Mucosa of descending colon (tissue), 3 donors: ENCODE measurements at regions of chr1 and their contacts with region 1.

Region 1: GRCh38 chr1:84143796-84144565 is at the start of gene PRKACB:
- DNase-seq: peak in 1 of 3 donors; percentile 36
- ATAC-seq: peak; percentile 91
- H3K4me3 ChIP-seq: no peak within 1 kb of the TSS
- H3K4me1 ChIP-seq: peaks cover 6% of the 10 kb centered on the region
- CTCF ChIP-seq: no peak
- total RNA-seq, gene PRKACB: 91.0 to 155 (median 99.3) TPM

Region 2: GRCh38 chr1:84208935-84209334 is 65.0 kb after region 1 on chr1:
- intact Hi-C with region 1: no loop called
- DNase-seq: no peak
- ATAC-seq: no peak
- H3K4me3 ChIP-seq: no peak overlapping the region
- H3K4me1 ChIP-seq: no peaks in the 10 kb centered on the region
- CTCF ChIP-seq: no peak

Region 3: GRCh38 chr1:84260864-84261518 is 117.0 kb after region 1 on chr1:
- intact Hi-C with region 1: loop called in 1 of 2 experiments (anchors 10 kb)
- DNase-seq: peak in 1 of 3 donors; percentile 47
- ATAC-seq: peak; percentile 91
- H3K4me3 ChIP-seq: no peak overlapping the region
- H3K4me1 ChIP-seq: peaks cover 21% of the 10 kb centered on the region
- CTCF ChIP-seq: no peak

Region 4: DNA sequence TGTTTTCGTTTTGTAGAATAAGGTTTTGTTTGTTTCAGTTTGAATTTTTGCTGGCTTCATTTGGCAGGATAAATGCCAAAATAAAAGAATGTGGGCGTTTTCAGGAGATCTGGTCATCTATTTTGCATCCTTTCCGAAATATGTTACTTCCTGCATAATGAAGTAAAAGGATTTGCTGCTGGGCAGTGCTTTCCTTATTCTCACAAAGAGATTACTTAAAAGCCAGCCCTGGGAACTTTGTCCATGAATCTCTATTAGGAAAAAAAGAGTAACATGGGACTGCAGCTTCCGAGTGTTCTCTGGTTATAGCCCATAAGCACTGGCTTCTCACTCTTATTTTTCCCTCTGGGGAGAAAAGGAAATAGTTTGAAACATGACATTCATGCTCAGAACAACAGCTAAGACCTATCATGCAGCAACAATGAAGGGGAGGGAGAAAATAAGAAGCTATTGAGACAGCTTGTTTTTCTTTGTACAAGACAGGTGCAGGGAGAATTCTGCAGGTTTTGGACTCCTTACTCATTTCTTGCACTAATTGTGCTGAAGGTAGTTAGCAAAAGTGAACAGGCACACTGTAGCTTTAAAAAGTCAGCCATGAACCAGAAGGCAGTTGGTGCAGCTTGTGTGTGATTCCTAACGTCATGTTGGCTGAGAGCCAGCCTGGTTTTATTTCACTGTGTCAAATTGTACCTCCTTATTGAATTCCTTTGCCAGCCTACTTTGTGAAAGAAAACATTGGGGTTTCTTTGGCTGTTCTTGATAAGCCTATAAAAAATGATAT is 157.2 kb after region 1 on chr1 and contains the start of gene SAMD13:
- intact Hi-C with region 1: loop called in 1 of 2 experiments (anchors 10 kb)
- DNase-seq: peak in 2 of 3 donors; percentile 36 to 99
- ATAC-seq: peak; percentile 52
- H3K4me3 ChIP-seq: no peak within 1 kb of the TSS
- H3K4me1 ChIP-seq: peaks cover 22% of the 10 kb centered on the region
- CTCF ChIP-seq: no peak
- total RNA-seq, gene SAMD13: 6.8 to 35.9 (median 21.0) TPM

Region 5: DNA sequence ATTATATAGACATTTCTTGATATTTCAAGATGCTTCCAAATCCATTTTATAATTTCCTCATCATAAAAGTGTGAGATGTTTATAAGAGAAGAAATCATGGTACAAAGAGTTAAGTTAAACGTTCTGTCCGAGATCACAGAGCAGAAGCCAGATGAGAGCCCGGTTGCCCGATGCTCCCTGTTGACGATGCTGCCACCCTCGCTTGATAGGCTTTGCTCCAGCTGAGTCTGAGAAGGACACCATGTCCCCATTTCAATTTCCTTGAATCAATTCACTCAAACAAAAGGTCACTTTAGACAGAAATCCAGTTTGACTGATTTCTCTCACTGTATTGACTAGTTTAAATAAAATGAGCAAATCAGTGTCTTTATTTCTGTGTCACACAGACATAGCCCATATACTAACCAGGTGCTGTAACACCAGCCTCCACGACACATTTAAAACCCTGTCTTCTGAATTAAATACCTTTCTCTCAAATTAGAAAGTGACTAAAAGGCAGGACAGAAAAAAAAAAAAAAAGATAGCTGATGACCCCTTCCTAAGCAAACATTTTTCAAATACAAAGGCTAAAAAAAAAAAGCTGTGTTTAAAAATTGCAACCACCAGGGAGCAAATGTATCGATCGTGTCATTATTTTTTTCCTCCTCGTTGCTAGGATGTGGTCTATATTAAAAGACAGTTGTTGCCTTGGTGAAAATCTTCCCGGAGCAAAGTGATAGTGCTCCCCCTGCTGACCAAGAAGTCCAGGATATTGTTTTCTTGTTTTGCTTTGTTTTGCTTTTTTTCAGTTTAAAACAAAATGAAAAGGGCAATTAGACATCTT is 289.5 kb after region 1 on chr1:
- intact Hi-C with region 1: loop called in 1 of 2 experiments (anchors 2 kb)
- DNase-seq: peak; percentile 61 to 86 (median 65)
- ATAC-seq: peak; percentile 92
- H3K4me3 ChIP-seq: no peak overlapping the region
- H3K4me1 ChIP-seq: peaks cover 6% of the 10 kb centered on the region
- CTCF ChIP-seq: peak; percentile 45